ENCODE measurements at regions of chr14 and their contacts with region 1.

Region 1: DNA sequence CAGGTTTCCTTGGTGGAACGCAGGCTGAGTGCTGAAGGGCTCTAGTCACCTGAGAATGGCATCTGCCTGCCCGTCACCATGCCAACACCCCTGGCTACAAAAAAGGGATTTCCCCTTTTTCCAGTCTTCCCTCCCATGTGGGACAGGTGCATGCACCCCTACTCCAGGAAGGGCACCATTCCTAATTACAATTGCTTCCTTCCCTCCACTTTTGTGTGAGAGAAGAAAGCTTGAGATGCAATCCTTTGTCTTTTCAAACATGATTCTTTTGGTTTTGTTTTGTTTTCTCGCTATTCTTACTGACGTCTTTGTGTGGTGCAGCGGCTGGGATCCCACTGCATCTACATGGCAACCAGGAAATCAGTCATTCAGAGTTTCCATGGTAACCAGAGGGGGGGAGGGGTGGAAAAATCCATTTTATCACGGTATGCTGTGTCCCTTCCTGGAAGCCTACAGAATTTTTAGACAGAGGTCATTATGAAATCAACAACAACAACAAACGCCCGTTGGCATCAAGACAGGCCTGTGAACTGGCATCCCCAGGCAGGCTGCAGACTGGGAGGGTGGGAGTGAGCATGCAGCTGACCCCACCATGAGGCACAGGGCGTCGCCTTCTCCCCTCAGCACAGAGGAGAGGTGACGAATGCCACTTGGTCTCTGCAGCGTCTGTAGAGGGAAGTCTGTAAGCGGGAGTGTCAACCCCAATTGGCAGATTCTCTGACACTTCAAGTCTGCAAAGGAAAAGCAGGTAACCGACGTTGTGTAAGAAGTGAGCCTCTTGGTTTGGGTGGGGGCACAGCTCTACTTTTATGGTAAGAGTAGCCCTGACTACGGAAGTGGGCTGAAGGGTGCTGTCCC is 13.6 kb upstream of the GNG2 start:
- DNase-seq: peak; percentile 92 to 99 (median 96)
- H3K4me3 ChIP-seq: peak overlapping the region; percentile 14 to 72
- H3K4me3 Mint-ChIP-seq: peak overlapping the region; percentile 85 to 98 (median 91)
- H3K27ac ChIP-seq: peak overlapping the region; percentile 92
- H3K27ac Mint-ChIP-seq: peak overlapping the region; percentile 98 to 100 (median 99)
- H3K4me1 ChIP-seq: peaks cover 51% of the 10 kb centered on the region
- H3K4me1 Mint-ChIP-seq: peaks cover 46 to 73% (median 52%) of the 10 kb centered on the region in 4 donors
- H3K27me3 ChIP-seq: no peaks in the 10 kb centered on the region
- H3K27me3 Mint-ChIP-seq: peaks cover 2% of the 10 kb centered on the region in 2 donors

Region 2: DNA sequence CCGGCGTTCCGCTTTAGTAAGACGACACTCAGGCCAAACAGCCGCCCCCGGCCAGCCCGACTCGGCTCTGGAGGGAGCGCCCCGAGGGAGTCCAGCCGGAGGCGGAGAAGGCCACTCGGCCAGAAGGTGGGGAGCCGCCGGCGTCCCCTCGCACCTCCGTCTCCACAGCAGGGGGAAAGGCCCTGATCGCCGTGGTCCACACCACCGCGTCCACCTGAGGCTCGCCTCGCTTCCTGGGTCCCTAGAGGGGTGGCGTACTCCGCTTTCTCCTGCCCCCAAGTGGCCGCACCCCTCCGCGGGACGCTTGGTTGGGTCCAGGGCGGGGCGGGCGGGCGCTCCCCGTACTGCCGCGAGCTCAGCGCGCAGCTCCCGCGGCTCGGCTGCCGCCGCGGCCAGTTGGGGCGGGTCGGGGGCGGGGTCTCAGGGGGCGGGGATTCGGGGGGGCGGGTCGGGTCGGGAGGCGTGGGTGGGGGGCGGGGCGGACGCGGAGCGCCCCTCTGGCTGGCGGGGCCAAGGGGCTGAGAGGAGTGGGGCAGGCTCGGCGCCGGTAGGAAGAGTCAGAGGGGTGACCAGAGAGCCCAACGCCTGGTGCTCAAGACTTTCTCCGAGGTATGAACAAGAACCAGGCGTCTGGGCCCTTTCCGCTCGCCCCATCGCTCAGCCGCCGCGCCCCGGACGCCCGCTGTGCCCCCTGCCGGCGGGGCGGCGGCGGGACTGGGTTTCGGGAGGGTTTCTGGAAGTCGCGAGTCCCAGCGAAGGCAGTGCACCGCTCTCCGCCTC is 195.3 kb before region 1 on chr14 and contains the start of gene FRMD6:
- CTCF ChIA-PET with region 1: interaction called, 3 read pairs
- POLR2A ChIA-PET with region 1: interaction called, 4 read pairs
- intact Hi-C with region 1: loop called (anchors 5 kb)
- DNase-seq: peak; percentile 82 to 89 (median 83)
- H3K4me3 ChIP-seq: peak within 1 kb of the TSS; percentile 47 to 77
- H3K4me3 Mint-ChIP-seq: peak within 1 kb of the TSS; percentile 82 to 92 (median 85)
- H3K27ac ChIP-seq: peak within 1 kb of the TSS; percentile 36
- H3K27ac Mint-ChIP-seq: peak within 1 kb of the TSS in 6 of 7 donors; percentile 66 to 84 (median 72)
- H3K4me1 ChIP-seq: peaks cover 19% of the 10 kb centered on the region
- H3K4me1 Mint-ChIP-seq: peaks cover 7 to 16% (median 11%) of the 10 kb centered on the region in 4 donors
- H3K27me3 ChIP-seq: peaks cover 14% of the 10 kb centered on the region
- H3K27me3 Mint-ChIP-seq: peaks cover 14 to 18% of the 10 kb centered on the region in 2 donors
- total RNA-seq, gene FRMD6: 0.80 to 0.81 TPM

Region 3: GRCh38 chr14:51726166-51726899 is 120.5 kb before region 1 on chr14:
- CTCF ChIA-PET with region 1: no interaction called
- POLR2A ChIA-PET with region 1: no interaction called
- intact Hi-C with region 1: no loop called
- DNase-seq: no peak
- H3K4me3 ChIP-seq: no peak overlapping the region
- H3K4me3 Mint-ChIP-seq: no peak overlapping the region
- H3K27ac ChIP-seq: no peak overlapping the region
- H3K27ac Mint-ChIP-seq: peak overlapping the region in 3 of 7 donors; percentile 8 to 26 (median 16)
- H3K4me1 ChIP-seq: no peaks in the 10 kb centered on the region
- H3K4me1 Mint-ChIP-seq: no peaks in the 10 kb centered on the region
- H3K27me3 ChIP-seq: no peaks in the 10 kb centered on the region
- H3K27me3 Mint-ChIP-seq: no peaks in the 10 kb centered on the region

Region 4: GRCh38 chr14:51828017-51828797 is 18.7 kb before region 1 on chr14:
- CTCF ChIA-PET with region 1: interaction called, 8 read pairs
- POLR2A ChIA-PET with region 1: interaction called, 20 read pairs
- intact Hi-C with region 1: no loop called
- DNase-seq: peak; percentile 30 to 80 (median 41)
- H3K4me3 ChIP-seq: no peak overlapping the region
- H3K4me3 Mint-ChIP-seq: peak overlapping the region in 2 of 8 donors; percentile 3 to 23
- H3K27ac ChIP-seq: no peak overlapping the region
- H3K27ac Mint-ChIP-seq: peak overlapping the region in 2 of 7 donors; percentile 12 to 24
- H3K4me1 ChIP-seq: peaks cover 19% of the 10 kb centered on the region
- H3K4me1 Mint-ChIP-seq: peaks cover 0 to 4% (median 0%) of the 10 kb centered on the region in 4 donors
- H3K27me3 ChIP-seq: no peaks in the 10 kb centered on the region
- H3K27me3 Mint-ChIP-seq: peaks cover 0 to 2% of the 10 kb centered on the region in 2 donors

Region 5: GRCh38 chr14:51879170-51879569 is 32.3 kb after region 1 on chr14:
- CTCF ChIA-PET with region 1: interaction called, 3 read pairs
- POLR2A ChIA-PET with region 1: interaction called, 19 read pairs
- intact Hi-C with region 1: loop called (anchors 5 kb)
- DNase-seq: no peak
- H3K4me3 ChIP-seq: no peak overlapping the region
- H3K4me3 Mint-ChIP-seq: peak overlapping the region in 2 of 8 donors; percentile 1 to 22
- H3K27ac ChIP-seq: no peak overlapping the region
- H3K27ac Mint-ChIP-seq: peak overlapping the region; percentile 2 to 80 (median 54)
- H3K4me1 ChIP-seq: peaks cover 89% of the 10 kb centered on the region
- H3K4me1 Mint-ChIP-seq: peaks cover 54 to 82% (median 70%) of the 10 kb centered on the region in 4 donors
- H3K27me3 ChIP-seq: no peaks in the 10 kb centered on the region
- H3K27me3 Mint-ChIP-seq: no peaks in the 10 kb centered on the region

Region 6: GRCh38 chr14:51889851-51890250 is 43.0 kb after region 1 on chr14:
- CTCF ChIA-PET with region 1: no interaction called
- POLR2A ChIA-PET with region 1: interaction called, 23 read pairs
- intact Hi-C with region 1: no loop called
- DNase-seq: no peak
- H3K4me3 ChIP-seq: no peak overlapping the region
- H3K4me3 Mint-ChIP-seq: peak overlapping the region in 7 of 8 donors; percentile 22 to 80 (median 65)
- H3K27ac ChIP-seq: peak overlapping the region; percentile 18
- H3K27ac Mint-ChIP-seq: peak overlapping the region; percentile 13 to 91 (median 71)
- H3K4me1 ChIP-seq: peaks cover 87% of the 10 kb centered on the region
- H3K4me1 Mint-ChIP-seq: peaks cover 48 to 93% (median 72%) of the 10 kb centered on the region in 4 donors
- H3K27me3 ChIP-seq: no peaks in the 10 kb centered on the region
- H3K27me3 Mint-ChIP-seq: no peaks in the 10 kb centered on the region

Region 7: GRCh38 chr14:51957950-51958349 is 111.1 kb after region 1 on chr14:
- CTCF ChIA-PET with region 1: no interaction called
- POLR2A ChIA-PET with region 1: interaction called, 3 read pairs
- intact Hi-C with region 1: loop called (anchors 5 kb)
- DNase-seq: no peak
- H3K4me3 ChIP-seq: no peak overlapping the region
- H3K4me3 Mint-ChIP-seq: no peak overlapping the region
- H3K27ac ChIP-seq: no peak overlapping the region
- H3K27ac Mint-ChIP-seq: peak overlapping the region in 2 of 7 donors; percentile 5 to 43
- H3K4me1 ChIP-seq: peaks cover 23% of the 10 kb centered on the region
- H3K4me1 Mint-ChIP-seq: peaks cover 37 to 67% (median 51%) of the 10 kb centered on the region in 4 donors
- H3K27me3 ChIP-seq: no peaks in the 10 kb centered on the region
- H3K27me3 Mint-ChIP-seq: no peaks in the 10 kb centered on the region

Region 8: GRCh38 chr14:51989293-51990234 is 142.7 kb after region 1 on chr14 and contains the start of gene RTRAF:
- CTCF ChIA-PET with region 1: no interaction called
- POLR2A ChIA-PET with region 1: interaction called, 8 read pairs
- intact Hi-C with region 1: loop called (anchors 1 kb)
- DNase-seq: peak; percentile 91 to 93 (median 92)
- H3K4me3 ChIP-seq: peak within 1 kb of the TSS; percentile 63 to 80
- H3K4me3 Mint-ChIP-seq: peak within 1 kb of the TSS; percentile 93 to 100 (median 98)
- H3K27ac ChIP-seq: peak within 1 kb of the TSS; percentile 87
- H3K27ac Mint-ChIP-seq: peak within 1 kb of the TSS; percentile 87 to 100 (median 98)
- H3K4me1 ChIP-seq: peaks cover 42% of the 10 kb centered on the region
- H3K4me1 Mint-ChIP-seq: peaks cover 27 to 39% (median 30%) of the 10 kb centered on the region in 4 donors
- H3K27me3 ChIP-seq: no peaks in the 10 kb centered on the region
- H3K27me3 Mint-ChIP-seq: no peaks in the 10 kb centered on the region
- total RNA-seq, gene RTRAF: 105 to 114 TPM